IMR-90 (cell line): ENCODE measurements at regions of chr10 and their contacts with region 1.

Region 1: GRCh38 chr10:19819419-19820033 is 3.3 kb downstream of the PLXDC2 start:
- DNase-seq: peak; percentile 43
- ATAC-seq: no peak
- H3K4me3 ChIP-seq: no peak overlapping the region
- H3K27ac ChIP-seq: no peak overlapping the region
- H3K4me1 ChIP-seq: no peaks in the 10 kb centered on the region
- H3K27me3 ChIP-seq: peaks cover 2% of the 10 kb centered on the region; the same call in 1 of the 2 replicates
- CTCF ChIP-seq: peak; percentile 74
- POLR2A ChIP-seq: no peak
- RAD21 ChIP-seq: peak; percentile 66

Region 2: DNA sequence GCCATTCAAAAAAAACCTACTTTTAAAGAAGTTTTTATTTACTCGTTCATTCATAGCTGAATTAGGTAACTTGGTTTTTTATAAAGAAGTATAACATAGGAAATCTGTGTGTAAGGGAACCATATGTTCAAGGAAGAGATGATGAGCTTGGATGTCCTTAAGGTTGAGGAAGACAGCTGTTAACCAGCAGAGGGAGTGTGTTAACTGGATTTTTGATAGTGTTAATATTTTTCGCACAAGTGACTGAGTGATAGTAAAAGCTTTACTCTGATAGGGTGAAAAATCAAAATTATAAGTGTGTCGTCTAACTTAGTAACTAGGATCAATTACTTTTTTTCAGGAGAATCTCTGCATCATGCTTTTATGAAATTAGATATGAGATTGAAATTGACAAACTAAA is 1025.6 kb before region 1 on chr10:
- CTCF ChIA-PET with region 1: no interaction called
- POLR2A ChIA-PET with region 1: no interaction called
- dilution Hi-C with region 1: no loop called
- in situ Hi-C with region 1: no loop called
- intact Hi-C with region 1: loop called (anchors 5 kb)
- DNase-seq: peak; percentile 55
- ATAC-seq: peak; percentile 57
- H3K4me3 ChIP-seq: no peak overlapping the region
- H3K27ac ChIP-seq: no peak overlapping the region
- H3K4me1 ChIP-seq: no peaks in the 10 kb centered on the region
- H3K27me3 ChIP-seq: no peaks in the 10 kb centered on the region
- CTCF ChIP-seq: peak; percentile 51
- POLR2A ChIP-seq: no peak
- RAD21 ChIP-seq: peak; percentile 58

Region 3: GRCh38 chr10:19777806-19778205 is 41.7 kb before region 1 on chr10:
- CTCF ChIA-PET with region 1: no interaction called
- POLR2A ChIA-PET with region 1: no interaction called
- dilution Hi-C with region 1: no loop called
- in situ Hi-C with region 1: no loop called
- intact Hi-C with region 1: loop called (anchors 2 kb)
- DNase-seq: no peak
- ATAC-seq: no peak
- H3K4me3 ChIP-seq: no peak overlapping the region
- H3K27ac ChIP-seq: no peak overlapping the region
- H3K4me1 ChIP-seq: peaks cover 2% of the 10 kb centered on the region; the same call in 1 of the 2 replicates
- H3K27me3 ChIP-seq: no peaks in the 10 kb centered on the region
- CTCF ChIP-seq: no peak
- POLR2A ChIP-seq: no peak
- RAD21 ChIP-seq: no peak

Region 4: DNA sequence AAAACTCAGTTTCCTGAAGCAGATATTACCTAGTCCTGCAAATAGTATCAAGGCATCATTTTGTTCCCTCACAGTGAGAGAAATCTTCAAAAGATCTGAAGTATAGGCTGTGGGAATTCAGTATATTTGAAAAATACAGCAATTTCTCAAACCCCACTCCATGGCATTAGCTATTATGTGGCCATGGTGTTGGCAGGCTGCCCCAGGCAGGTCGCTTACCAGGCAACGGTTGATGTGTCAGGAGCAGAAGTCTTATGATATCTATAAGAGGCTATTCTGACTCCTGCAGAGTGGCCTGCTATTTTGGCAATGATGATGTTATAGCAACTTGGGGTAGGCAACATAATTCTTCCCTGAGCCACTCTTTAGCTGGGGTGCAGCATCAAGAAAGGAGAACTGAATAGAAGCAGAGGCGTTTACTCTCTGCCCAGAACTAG is 184.6 kb after region 1 on chr10:
- CTCF ChIA-PET with region 1: no interaction called
- POLR2A ChIA-PET with region 1: no interaction called
- dilution Hi-C with region 1: no loop called
- in situ Hi-C with region 1: no loop called
- intact Hi-C with region 1: loop called (anchors 10 kb)
- DNase-seq: peak; percentile 45
- ATAC-seq: peak; percentile 31
- H3K4me3 ChIP-seq: no peak overlapping the region
- H3K27ac ChIP-seq: peak overlapping the region; percentile 65; the same call in 1 of the 2 replicates
- H3K4me1 ChIP-seq: peaks cover 6% of the 10 kb centered on the region; the same call in 1 of the 2 replicates
- H3K27me3 ChIP-seq: no peaks in the 10 kb centered on the region
- CTCF ChIP-seq: no peak
- POLR2A ChIP-seq: no peak
- RAD21 ChIP-seq: no peak

Region 5: DNA sequence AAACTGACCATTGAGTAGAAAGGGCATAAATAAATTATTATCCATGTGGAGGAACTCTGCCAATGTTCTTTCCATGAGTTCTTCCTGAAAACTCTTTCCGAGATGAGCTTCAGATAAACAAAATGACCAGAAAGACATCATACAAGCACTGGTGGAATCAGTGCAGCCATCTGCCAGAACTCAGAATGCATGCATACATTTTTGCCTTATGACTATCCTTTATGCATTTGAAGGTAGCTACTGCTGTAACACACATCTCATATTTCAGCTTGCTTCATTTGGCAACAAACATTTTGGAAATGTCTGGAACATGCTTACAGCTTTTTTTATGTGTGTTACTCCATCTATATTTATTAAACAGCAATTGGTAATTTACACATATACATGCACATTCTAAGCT is 445.6 kb after region 1 on chr10:
- CTCF ChIA-PET with region 1: no interaction called
- POLR2A ChIA-PET with region 1: no interaction called
- dilution Hi-C with region 1: no loop called
- in situ Hi-C with region 1: no loop called
- intact Hi-C with region 1: loop called (anchors 10 kb)
- DNase-seq: peak; percentile 45
- ATAC-seq: peak; percentile 37
- H3K4me3 ChIP-seq: no peak overlapping the region
- H3K27ac ChIP-seq: no peak overlapping the region
- H3K4me1 ChIP-seq: no peaks in the 10 kb centered on the region
- H3K27me3 ChIP-seq: no peaks in the 10 kb centered on the region
- CTCF ChIP-seq: no peak
- POLR2A ChIP-seq: no peak
- RAD21 ChIP-seq: no peak